ENCODE measurements at regions of chr12 and their contacts with region 1.

Region 1: GRCh38 chr12:14948672-14949071 is 10.3 kb upstream of the ERP27 start:
- DNase-seq: peak; percentile 62
- H3K4me3 Mint-ChIP-seq: peak overlapping the region; percentile 73
- H3K27ac Mint-ChIP-seq: peak overlapping the region; percentile 98
- H3K4me1 Mint-ChIP-seq: peaks cover 71% of the 10 kb centered on the region
- H3K27me3 Mint-ChIP-seq: no peaks in the 10 kb centered on the region

Region 2: GRCh38 chr12:14394317-14395073 is 554.2 kb before region 1 on chr12:
- intact Hi-C with region 1: loop called (anchors 5 kb)
- DNase-seq: peak; percentile 42
- H3K4me3 Mint-ChIP-seq: peak overlapping the region; percentile 89
- H3K27ac Mint-ChIP-seq: peak overlapping the region; percentile 92
- H3K4me1 Mint-ChIP-seq: peaks cover 67% of the 10 kb centered on the region
- H3K27me3 Mint-ChIP-seq: no peaks in the 10 kb centered on the region

Region 3: DNA sequence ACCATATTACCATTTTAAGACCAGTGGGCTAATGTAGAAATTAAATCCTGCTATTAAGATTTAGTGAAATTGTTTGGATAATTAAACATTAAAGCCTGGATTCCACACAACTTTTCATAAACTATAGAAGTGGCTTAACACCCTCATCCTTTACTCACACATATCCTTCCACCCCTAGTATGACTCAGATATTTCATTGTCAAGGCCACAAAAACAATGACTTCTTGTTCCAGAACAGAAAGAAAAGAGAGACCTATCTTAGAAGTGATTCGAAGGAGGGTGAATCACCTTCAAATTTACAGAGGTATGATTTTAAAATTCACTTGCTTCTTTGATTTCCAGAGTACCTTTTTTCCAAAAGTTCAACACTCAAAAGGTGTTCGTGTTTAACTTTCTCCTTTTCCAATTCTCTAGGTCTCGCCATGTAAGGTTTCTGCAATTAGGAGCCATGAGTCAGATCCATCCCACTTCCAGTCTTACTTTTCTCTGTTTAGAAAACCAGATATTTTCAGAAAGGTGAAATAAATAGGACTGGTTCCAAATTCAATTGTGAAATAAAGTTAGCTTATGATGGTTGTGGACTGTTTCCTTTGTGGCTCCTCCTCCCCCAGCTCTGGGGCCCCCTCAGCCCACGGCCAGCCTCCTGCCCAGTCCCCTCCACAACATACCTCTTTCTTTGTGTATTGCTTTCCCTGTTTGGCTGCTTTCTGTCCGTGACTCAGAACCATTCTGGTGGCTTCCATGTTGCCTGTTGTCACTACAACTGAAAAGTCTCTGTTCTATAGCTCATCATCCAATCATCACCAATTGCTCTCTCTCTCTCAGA is 38.4 kb before region 1 on chr12:
- intact Hi-C with region 1: loop called (anchors 1 kb)
- DNase-seq: no peak
- H3K4me3 Mint-ChIP-seq: no peak overlapping the region
- H3K27ac Mint-ChIP-seq: peak overlapping the region; percentile 91
- H3K4me1 Mint-ChIP-seq: peaks cover 24% of the 10 kb centered on the region
- H3K27me3 Mint-ChIP-seq: no peaks in the 10 kb centered on the region

Region 4: DNA sequence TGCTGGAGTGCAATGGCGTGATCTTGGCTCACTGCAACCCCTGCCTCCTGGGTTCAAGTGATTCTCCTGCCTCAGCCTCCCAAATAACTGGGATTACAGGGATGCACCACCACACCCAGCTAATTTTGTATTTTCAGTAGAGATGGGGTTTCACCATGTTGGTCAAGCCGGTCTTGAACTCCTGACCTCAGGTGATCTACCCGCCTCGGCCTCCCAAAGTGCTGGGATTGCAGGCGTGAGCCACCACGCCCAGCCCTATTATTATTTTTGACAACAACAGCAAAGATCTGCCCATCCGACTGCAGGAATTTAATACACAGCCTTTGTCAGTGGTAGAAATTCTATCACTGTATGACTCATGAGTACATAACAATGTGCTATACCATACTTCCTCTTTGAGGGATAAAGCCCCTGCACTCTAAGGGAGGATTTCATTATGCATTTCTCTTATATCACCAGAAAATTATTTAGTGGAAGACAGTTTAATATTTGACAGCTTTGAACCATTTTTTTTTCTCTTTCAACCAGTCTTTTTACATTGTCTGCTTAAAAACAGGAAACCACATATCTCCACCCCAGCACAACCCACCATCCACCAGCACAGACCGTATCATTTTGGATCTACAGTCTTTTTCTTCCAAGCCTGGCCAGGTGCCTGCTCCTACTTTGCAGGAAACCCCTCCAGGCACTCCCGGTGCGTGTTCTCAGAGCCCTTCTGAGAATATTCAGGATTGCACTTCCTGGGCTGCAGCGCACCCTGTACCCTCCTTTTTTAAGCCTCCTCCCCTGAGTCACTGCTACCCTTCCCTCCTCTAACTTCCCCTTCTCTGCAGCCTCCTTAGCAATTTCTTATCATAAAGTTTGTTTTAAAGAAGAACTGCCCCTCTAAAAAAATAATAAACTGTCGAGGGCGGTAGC is 12.1 kb after region 1 on chr12:
- intact Hi-C with region 1: loop called (anchors 1 kb)
- DNase-seq: peak; percentile 43
- H3K4me3 Mint-ChIP-seq: peak overlapping the region; percentile 96
- H3K27ac Mint-ChIP-seq: peak overlapping the region; percentile 97
- H3K4me1 Mint-ChIP-seq: peaks cover 58% of the 10 kb centered on the region
- H3K27me3 Mint-ChIP-seq: no peaks in the 10 kb centered on the region

Region 5: GRCh38 chr12:14981049-14981448 is 32.4 kb after region 1 on chr12:
- intact Hi-C with region 1: loop called (anchors 5 kb)
- DNase-seq: no peak
- H3K4me3 Mint-ChIP-seq: no peak overlapping the region
- H3K27ac Mint-ChIP-seq: no peak overlapping the region
- H3K4me1 Mint-ChIP-seq: peaks cover 50% of the 10 kb centered on the region
- H3K27me3 Mint-ChIP-seq: no peaks in the 10 kb centered on the region

Region 6: DNA sequence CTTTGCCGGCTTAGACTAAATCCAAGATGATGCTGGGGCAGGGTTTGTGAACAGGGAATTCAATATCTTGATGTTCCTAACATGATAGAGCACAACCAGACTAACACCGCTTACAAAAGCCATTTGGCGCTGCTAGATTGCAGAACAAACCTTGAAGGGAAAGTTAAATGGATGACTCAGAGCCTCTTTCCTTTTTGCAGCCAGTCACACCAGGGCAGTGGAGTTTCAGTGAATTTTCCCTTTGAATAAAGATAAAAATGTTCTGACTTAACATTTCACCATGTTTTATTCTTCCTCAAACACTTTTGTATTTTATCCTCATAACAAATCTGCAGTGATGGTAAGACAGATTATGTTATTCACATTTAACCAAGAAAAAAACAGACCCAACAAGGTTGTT is 71.5 kb after region 1 on chr12:
- intact Hi-C with region 1: no loop called
- DNase-seq: no peak
- H3K4me3 Mint-ChIP-seq: no peak overlapping the region
- H3K27ac Mint-ChIP-seq: no peak overlapping the region
- H3K4me1 Mint-ChIP-seq: no peaks in the 10 kb centered on the region
- H3K27me3 Mint-ChIP-seq: peaks cover 21% of the 10 kb centered on the region

Region 7: DNA sequence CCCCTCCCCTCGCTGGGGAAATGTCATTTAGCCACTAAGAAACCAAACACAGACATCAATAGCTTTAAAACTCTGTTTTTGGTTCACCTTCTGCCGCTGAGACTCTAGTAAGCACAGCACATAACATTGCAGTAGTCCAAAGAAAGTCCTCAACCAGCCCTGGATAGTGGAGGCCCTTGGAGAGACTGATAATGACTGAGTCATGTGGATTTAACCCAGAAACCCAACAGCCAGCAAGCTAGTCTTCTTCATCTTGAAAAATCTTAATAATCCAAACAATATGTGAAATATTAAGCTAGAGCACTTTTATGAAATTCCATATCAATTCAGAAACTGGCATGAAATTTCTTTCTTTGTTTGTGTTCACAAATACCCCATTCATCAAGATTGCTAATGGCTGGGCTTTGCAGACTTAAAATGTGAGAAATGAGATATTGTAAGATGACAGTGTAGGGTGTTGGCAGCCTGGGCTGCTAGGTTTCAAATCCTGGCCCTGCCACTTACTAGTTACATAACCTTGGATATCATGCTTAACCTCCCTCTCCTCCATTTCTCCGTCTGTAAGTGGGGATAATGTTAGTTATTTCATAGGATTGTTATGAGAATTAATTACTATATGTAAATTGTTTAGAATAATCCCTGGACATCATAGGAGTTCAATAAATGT is 232.5 kb after region 1 on chr12:
- intact Hi-C with region 1: no loop called
- DNase-seq: no peak
- H3K4me3 Mint-ChIP-seq: no peak overlapping the region
- H3K27ac Mint-ChIP-seq: no peak overlapping the region
- H3K4me1 Mint-ChIP-seq: no peaks in the 10 kb centered on the region
- H3K27me3 Mint-ChIP-seq: peaks cover 5% of the 10 kb centered on the region

Region 8: DNA sequence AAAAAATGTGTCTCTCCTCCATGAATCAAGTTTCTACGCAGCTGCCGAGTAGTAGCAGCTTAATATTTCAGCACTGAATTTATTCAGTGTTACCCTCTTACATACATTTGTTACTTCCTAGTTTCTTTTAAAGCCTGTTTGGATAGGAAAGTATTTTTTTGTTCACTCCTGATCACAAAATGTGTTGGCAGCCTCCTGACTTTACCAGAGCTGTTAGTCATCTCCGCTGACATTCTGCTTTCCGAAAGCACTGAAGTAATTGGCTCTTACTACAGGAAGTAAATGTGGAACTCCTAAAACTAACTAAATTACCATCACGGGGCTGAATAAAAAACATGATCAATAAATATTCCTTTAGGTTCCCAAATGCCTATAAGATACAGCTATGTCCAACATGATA is 615.0 kb after region 1 on chr12:
- intact Hi-C with region 1: loop called (anchors 5 kb)
- DNase-seq: no peak
- H3K4me3 Mint-ChIP-seq: peak overlapping the region; percentile 83
- H3K27ac Mint-ChIP-seq: peak overlapping the region; percentile 91
- H3K4me1 Mint-ChIP-seq: peaks cover 65% of the 10 kb centered on the region
- H3K27me3 Mint-ChIP-seq: no peaks in the 10 kb centered on the region